MCF 10A (cell line): ENCODE measurements at regions of chr6 and their contacts with region 1.

Region 1: GRCh38 chr6:165729307-165729936 is 66.4 kb upstream of the PDE10A start:
- DNase-seq: peak; percentile 54
- H3K4me3 Mint-ChIP-seq: no peak overlapping the region
- H3K27ac Mint-ChIP-seq: no peak overlapping the region
- H3K4me1 Mint-ChIP-seq: no peaks in the 10 kb centered on the region
- H3K27me3 Mint-ChIP-seq: no peaks in the 10 kb centered on the region
- CTCF ChIP-seq: peak; percentile 60

Region 2: GRCh38 chr6:165704045-165704748 is 25.2 kb before region 1 on chr6:
- CTCF ChIA-PET with region 1: interaction called, 11 read pairs
- POLR2A ChIA-PET with region 1: no interaction called
- intact Hi-C with region 1: no loop called
- DNase-seq: peak; percentile 78
- H3K4me3 Mint-ChIP-seq: no peak overlapping the region
- H3K27ac Mint-ChIP-seq: no peak overlapping the region
- H3K4me1 Mint-ChIP-seq: peaks cover 7% of the 10 kb centered on the region
- H3K27me3 Mint-ChIP-seq: no peaks in the 10 kb centered on the region
- CTCF ChIP-seq: no peak

Region 3: GRCh38 chr6:165744555-165745228 is 15.3 kb after region 1 on chr6:
- CTCF ChIA-PET with region 1: interaction called, 17 read pairs
- POLR2A ChIA-PET with region 1: no interaction called
- intact Hi-C with region 1: no loop called
- DNase-seq: no peak
- H3K4me3 Mint-ChIP-seq: no peak overlapping the region
- H3K27ac Mint-ChIP-seq: no peak overlapping the region
- H3K4me1 Mint-ChIP-seq: no peaks in the 10 kb centered on the region
- H3K27me3 Mint-ChIP-seq: no peaks in the 10 kb centered on the region
- CTCF ChIP-seq: no peak

Region 4: GRCh38 chr6:165850434-165851019 is 121.1 kb after region 1 on chr6:
- CTCF ChIA-PET with region 1: interaction called, 28 read pairs
- POLR2A ChIA-PET with region 1: no interaction called
- intact Hi-C with region 1: loop called (anchors 1 kb)
- DNase-seq: peak; percentile 57
- H3K4me3 Mint-ChIP-seq: no peak overlapping the region
- H3K27ac Mint-ChIP-seq: no peak overlapping the region
- H3K4me1 Mint-ChIP-seq: no peaks in the 10 kb centered on the region
- H3K27me3 Mint-ChIP-seq: no peaks in the 10 kb centered on the region
- CTCF ChIP-seq: peak; percentile 85

Region 5: DNA sequence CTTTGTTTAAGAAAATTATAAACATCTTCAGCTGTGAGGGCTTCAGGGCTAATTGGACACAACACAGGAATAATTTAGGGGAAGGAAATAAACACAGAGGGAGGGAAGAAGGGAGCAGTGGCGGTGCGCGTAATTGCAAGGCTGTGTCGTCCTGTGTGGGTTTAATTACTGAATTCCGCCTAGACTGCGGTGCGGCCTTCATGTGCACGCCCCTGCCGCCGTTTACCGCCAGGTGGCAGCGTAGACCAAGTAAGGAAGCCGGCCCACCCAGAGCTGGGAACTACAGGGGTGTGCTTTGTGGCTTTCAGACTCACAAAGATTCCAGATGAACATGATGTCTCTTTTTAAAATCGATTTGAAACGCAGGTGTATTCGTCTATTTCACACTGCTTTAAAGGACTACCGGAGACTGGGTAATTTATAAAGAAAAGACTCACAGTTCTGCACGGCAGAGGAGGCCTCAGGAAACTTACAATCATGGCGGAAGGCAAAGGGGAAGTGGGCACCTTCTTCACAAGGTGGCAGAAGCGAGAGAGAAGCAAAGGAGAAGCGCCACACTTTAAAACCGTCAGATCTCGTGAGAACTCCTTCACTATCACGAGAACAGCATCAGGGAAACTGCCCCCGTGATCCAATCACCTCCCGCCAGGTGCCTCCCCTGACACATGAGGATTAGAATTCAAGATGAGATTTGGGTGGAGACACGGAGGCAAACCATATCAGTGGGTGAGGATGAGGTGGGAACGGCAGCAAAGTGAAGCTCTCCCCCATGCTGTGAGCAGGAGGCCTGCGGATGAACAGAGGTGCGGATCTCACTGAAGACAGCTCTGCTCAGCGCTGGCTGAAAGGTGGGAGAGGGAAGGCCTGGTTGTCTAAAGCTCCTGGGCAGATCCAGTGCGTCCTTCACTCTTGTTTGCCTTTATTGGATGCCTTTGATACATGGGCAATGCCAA is 155.7 kb after region 1 on chr6:
- CTCF ChIA-PET with region 1: no interaction called
- POLR2A ChIA-PET with region 1: no interaction called
- intact Hi-C with region 1: no loop called
- DNase-seq: peak; percentile 67
- H3K4me3 Mint-ChIP-seq: no peak overlapping the region
- H3K27ac Mint-ChIP-seq: no peak overlapping the region
- H3K4me1 Mint-ChIP-seq: no peaks in the 10 kb centered on the region
- H3K27me3 Mint-ChIP-seq: no peaks in the 10 kb centered on the region
- CTCF ChIP-seq: peak; percentile 88